GM12878 (cell line): ENCODE measurements at regions of chr3 and their contacts with region 1.

Region 1: DNA sequence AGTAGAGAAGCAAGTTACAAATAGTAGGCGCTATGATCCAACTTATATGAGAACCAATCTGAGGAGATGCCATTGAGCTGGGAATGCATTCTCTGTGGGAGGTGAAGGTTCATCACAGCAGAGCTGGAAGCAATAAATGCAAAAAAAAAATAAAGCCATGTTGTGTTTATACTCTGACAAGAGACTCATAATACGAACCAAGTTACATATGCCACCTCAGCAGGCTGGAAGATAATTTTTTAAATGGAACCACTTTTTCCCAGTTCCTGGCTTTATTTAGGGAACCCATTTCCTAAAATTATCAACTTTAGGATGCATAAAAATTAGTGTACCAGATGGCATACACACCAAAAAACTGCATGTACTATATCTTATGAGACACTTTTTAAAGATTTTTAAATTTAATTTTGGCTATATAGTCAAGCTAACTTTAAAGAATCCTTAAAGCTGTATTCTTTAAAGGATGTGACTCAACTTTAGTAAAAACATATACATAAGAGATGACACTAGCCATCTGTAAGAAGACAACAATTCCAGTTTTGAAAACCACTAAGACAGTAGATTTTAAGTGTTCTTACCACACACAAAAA is 23.6 kb upstream of the SETMAR start:
- DNase-seq: no peak
- ATAC-seq: no peak
- H3K4me3 ChIP-seq: no peak overlapping the region
- H3K27ac ChIP-seq: no peak overlapping the region
- H3K4me1 ChIP-seq: no peaks in the 10 kb centered on the region
- H3K27me3 ChIP-seq: no peaks in the 10 kb centered on the region
- CTCF ChIP-seq: no peak
- EP300 ChIP-seq: no peak
- POLR2A ChIP-seq: no peak
- RAD21 ChIP-seq: no peak

Region 2: DNA sequence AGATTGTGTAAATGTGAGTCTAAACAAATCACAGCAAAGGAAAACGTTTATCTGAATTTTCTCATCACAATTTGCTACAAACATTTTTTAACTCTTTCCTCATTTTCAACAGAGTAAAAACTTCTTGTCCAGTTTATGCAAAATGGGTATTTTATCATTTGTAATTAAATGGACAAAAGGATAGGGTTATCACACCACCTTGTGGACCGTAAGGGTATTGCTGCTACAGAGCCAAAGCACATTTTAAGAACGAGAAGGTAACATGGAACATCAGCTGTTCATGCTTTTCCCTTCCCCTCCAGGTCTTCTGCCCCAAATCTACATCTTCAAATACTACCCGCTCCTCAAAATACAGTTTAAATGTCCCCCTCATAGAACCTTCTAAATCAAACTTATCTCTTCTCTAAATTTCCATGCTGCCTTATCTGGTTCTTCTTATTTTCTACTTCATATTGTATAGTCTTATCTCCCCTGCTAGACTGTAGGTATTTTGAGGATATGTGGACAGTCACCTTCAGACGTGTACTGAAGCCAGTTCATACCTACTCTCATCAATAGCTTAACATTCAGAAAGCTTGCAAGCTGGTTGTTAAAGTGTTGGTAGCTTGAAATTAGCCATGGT is 10.8 kb after region 1 on chr3:
- CTCF ChIA-PET with region 1: interaction called, 14 read pairs
- POLR2A ChIA-PET with region 1: no interaction called
- RAD21 ChIA-PET with region 1: no interaction called
- SMC1A ChIA-PET with region 1: interaction called, 3 read pairs
- in situ Hi-C with region 1: no loop called
- intact Hi-C with region 1: no loop called
- DNase-seq: no peak
- ATAC-seq: peak; percentile 75
- H3K4me3 ChIP-seq: no peak overlapping the region
- H3K27ac ChIP-seq: no peak overlapping the region
- H3K4me1 ChIP-seq: no peaks in the 10 kb centered on the region
- H3K27me3 ChIP-seq: peaks cover 0 to 2% of the 10 kb centered on the region in 2 experiments; a peak in 2 of 4 replicates
- CTCF ChIP-seq: peak; percentile 83 to 86 (median 85)
- EP300 ChIP-seq: no peak
- POLR2A ChIP-seq: no peak
- RAD21 ChIP-seq: peak; percentile 88